ENCODE measurements at regions of chr4 and their contacts with region 1.

Region 1: DNA sequence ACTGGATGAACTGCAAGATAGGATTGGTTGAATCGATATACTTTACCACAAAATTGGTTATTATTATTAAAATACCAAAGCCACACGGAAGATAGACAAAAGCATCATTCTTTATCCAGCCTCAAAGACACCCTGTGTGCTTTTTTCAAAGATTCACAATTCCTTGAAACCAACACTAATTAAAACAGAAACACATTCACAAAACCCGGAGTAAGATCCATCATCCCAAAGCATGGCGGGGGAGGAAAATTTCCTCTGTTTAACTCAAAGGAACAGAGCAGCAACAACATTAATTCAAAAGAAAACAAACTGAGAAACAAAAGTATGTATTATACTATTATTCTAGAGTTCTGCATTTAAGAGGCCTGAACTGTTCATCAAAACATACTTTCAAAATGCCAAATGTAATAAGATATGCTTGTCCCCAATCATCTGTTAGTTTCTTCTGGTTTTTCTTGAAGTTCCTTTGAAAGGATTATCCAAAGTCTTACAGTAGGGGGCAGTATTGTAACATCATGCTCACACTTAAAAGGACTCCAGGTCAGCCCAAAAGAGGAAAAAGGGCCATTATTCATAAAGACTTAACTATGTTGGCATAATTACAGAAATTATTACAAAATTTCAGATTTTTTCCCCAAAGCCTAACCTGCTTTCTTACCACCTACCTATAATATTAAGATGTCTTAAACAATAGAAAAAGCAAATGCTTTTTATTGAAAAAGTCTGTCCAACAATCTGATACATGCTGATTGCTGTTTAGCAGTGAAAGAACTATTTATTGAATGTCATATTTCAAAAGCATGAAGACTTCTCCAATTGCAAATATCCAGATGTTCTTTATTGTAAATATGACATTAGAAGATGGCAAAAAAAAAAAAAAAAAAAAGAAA is 168.7 kb downstream of the SCFD2 start:
- DNase-seq: no peak
- ATAC-seq: peak; percentile 36
- H3K4me3 Mint-ChIP-seq: no peak overlapping the region
- H3K27ac Mint-ChIP-seq: no peak overlapping the region
- H3K4me1 Mint-ChIP-seq: no peaks in the 10 kb centered on the region
- H3K27me3 Mint-ChIP-seq: no peaks in the 10 kb centered on the region

Region 2: DNA sequence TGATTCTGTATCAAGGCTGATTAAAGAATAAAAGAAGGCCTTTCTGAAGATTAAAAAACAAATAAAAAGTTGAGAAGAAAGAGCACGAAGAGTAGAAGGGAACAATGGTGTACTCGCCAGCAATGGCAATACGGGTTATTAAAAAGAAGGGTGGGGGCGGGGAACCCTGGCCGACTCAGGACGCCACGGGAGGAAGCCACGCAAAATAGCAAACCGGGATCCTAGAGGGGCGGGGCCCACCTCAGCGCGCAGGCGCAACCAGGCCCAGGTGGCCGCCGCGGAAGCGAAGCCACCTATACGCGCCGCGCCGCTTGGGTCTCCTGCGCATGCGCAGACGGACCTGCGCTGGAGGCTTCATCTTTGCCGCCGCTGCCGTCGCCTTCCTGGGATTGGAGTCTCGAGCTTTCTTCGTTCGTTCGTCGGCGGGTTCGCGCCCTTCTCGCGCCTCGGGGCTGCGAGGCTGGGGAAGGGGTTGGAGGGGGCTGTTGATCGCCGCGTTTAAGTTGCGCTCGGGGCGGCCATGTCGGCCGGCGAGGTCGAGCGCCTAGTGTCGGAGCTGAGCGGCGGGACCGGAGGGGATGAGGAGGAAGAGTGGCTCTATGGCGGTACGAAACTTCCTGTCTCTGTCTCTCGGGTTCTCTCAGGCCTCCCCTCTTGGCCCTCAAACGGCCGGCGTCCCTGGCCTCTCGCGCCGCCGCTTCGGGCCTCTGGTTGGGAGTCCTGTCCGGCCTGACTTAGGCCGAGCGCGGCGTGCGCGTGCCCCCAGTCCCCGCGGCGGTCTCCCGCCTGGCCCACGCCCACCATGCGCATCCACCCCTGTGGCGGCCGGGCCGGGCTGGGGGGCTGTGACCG is 180.4 kb after region 1 on chr4 and contains the start of gene FIP1L1:
- CTCF ChIA-PET with region 1: no interaction called
- POLR2A ChIA-PET with region 1: no interaction called
- intact Hi-C with region 1: loop called in 1 of 2 experiments (anchors 5 kb)
- DNase-seq: peak; percentile 98
- ATAC-seq: peak; percentile 97
- H3K4me3 Mint-ChIP-seq: peak within 1 kb of the TSS; percentile 99
- H3K27ac Mint-ChIP-seq: peak within 1 kb of the TSS; percentile 97
- H3K4me1 Mint-ChIP-seq: peaks cover 29% of the 10 kb centered on the region
- H3K27me3 Mint-ChIP-seq: no peaks in the 10 kb centered on the region
- total RNA-seq, gene FIP1L1: 72.3 to 96.3 TPM

Region 3: DNA sequence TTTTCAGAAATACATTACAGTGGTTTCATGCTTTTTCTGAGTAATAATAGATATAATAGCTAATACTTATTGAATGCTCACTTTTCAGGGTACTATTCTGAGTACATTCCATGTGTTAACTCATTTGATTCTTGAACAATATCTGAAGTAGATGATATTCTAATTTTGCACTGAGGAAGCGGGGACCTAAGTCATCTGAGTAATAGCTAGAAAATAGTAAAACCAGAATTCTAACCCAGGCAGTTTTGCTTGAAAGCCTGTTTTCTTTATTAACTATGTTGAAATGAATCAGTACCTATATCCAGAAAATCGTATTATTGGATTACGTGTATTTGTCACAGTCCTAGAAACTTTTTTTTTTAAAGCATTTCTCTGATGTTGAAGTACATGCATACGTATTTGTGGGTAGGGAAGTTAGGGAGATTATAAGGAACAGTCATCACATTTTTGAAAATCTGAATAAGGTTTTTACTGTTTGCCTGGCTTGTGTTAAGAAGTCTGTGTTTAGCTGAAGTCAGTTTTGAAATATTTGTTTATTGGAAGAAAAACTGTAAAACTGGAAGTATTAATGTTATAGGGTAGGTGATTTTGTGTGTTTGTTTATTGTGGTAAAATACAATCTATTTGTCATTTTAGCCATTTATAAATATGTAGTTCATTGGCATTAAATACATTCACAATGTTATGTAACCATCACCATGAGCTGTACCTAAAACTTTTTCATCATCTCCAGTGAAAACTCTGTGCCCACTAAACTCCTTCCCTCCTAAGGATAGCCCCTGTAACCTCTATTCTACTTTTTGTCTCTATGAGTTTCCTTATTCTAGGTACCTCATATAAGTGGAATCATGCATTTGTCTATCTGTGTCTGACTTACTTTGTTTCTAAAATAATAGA is 235.6 kb after region 1 on chr4:
- CTCF ChIA-PET with region 1: no interaction called
- POLR2A ChIA-PET with region 1: no interaction called
- intact Hi-C with region 1: loop called in 1 of 2 experiments (anchors 10 kb)
- DNase-seq: no peak
- ATAC-seq: peak; percentile 81
- H3K4me3 Mint-ChIP-seq: no peak overlapping the region
- H3K27ac Mint-ChIP-seq: no peak overlapping the region
- H3K4me1 Mint-ChIP-seq: peaks cover 26% of the 10 kb centered on the region
- H3K27me3 Mint-ChIP-seq: no peaks in the 10 kb centered on the region

Region 4: GRCh38 chr4:53804719-53805118 is 607.6 kb after region 1 on chr4:
- CTCF ChIA-PET with region 1: interaction called, 3 read pairs
- POLR2A ChIA-PET with region 1: no interaction called
- intact Hi-C with region 1: loop called in 1 of 2 experiments (anchors 1 kb)
- DNase-seq: peak; percentile 58
- ATAC-seq: no peak
- H3K4me3 Mint-ChIP-seq: no peak overlapping the region
- H3K27ac Mint-ChIP-seq: no peak overlapping the region
- H3K4me1 Mint-ChIP-seq: no peaks in the 10 kb centered on the region
- H3K27me3 Mint-ChIP-seq: peaks cover 2% of the 10 kb centered on the region

Region 5: GRCh38 chr4:53908661-53909078 is 711.5 kb after region 1 on chr4:
- CTCF ChIA-PET with region 1: no interaction called
- POLR2A ChIA-PET with region 1: no interaction called
- intact Hi-C with region 1: loop called in 1 of 2 experiments (anchors 5 kb)
- DNase-seq: no peak
- ATAC-seq: peak; percentile 60
- H3K4me3 Mint-ChIP-seq: no peak overlapping the region
- H3K27ac Mint-ChIP-seq: no peak overlapping the region
- H3K4me1 Mint-ChIP-seq: peaks cover 13% of the 10 kb centered on the region
- H3K27me3 Mint-ChIP-seq: peaks cover 45% of the 10 kb centered on the region

Region 6: DNA sequence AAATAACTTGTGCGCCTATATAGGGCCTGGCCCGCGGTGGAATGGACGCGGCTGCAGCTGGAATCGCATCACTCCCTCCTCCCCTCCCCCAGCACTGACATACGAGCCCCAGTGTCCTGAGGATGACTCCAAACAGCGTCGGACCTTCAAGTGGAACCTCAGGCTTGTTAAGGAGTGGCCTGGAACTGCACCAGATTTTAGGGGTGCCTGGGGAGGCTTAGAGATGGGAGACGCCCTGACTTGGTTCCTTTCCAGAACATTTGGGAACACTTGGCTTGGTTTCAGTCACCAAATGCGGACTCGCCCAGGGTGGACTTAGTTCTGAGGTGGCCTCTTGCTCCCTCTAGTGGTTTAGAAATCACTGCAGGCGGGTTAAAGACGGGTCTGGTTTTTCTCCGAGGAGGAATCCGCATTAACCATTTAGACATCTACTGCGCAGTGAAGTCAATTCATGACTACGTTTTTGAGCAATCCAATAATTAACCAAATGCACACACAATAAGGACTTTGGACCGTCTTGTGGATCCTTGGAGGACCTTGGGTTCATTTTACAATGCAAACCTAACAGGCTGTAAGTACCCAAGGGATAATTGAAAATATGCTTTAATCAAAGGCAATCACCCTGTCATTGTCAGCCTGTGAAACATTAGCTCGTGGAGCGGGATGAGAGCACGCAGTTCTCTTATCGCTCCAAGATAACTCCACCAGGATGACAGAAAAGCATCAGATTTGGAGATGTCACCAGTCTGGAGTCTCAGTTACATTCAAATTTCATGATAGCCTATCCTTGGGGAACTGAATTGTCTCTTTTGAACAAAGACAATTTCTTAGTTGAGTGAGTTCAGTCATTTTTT is 1020.7 kb after region 1 on chr4:
- CTCF ChIA-PET with region 1: no interaction called
- POLR2A ChIA-PET with region 1: no interaction called
- intact Hi-C with region 1: loop called in 1 of 2 experiments (anchors 5 kb)
- DNase-seq: peak; percentile 68
- ATAC-seq: peak; percentile 89
- H3K4me3 Mint-ChIP-seq: peak overlapping the region; percentile 45
- H3K27ac Mint-ChIP-seq: no peak overlapping the region
- H3K4me1 Mint-ChIP-seq: peaks cover 3% of the 10 kb centered on the region
- H3K27me3 Mint-ChIP-seq: peaks cover 27% of the 10 kb centered on the region